SK-N-SH (cell line): ENCODE measurements at regions of chr15 and their contacts with region 1.

Region 1: DNA sequence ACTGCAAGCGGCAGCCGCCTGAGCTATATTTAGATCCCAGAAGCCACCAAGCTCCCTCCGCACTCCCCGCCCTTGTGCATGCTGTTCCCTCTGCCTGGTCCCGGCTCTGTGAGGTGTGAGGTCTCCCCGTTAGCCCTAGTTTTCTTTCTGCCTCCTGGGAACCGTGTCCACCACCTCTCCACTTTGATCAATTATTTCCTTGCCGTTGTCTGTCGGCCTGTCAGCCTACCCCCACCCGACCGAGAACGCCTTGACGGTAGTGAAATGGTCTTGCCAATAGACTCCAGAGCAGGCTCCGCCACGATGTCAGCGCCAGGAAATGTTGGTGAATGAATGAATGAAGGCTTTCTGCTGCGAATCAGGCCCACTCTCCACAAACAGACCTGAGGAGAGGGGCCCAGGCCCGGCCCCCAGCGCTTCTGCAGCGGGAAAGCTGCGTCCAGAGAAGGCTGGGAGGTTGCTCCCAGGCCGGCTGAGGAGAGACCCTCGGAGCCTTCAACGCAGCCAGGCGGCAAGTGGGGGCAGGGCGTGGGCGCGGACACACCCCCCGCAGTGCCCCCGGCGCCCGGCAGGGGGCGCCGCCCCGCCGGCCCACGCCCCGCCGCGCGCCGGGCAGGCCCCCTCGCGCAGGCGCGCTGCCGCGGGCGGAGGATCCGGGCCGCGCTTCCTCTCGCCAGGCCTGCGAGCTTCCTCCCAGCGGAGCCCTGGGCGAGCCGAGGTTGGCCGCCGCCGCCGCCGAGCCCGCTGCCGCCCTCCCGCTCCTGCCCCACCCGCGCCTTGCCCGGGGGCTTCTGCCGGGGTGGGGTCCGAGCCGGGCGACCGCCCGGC is at the start of gene CSK:
- DNase-seq: peak; percentile 99
- H3K4me3 ChIP-seq: peak within 1 kb of the TSS; percentile 85 to 97
- H3K27ac ChIP-seq: peak within 1 kb of the TSS in 1 of 2 experiments; percentile 76; a peak in 2 of 4 replicates
- H3K4me1 ChIP-seq: peaks cover 10 to 46% of the 10 kb centered on the region in 2 experiments; a peak in 2 of 4 replicates
- H3K27me3 ChIP-seq: no peaks in the 10 kb centered on the region
- CTCF ChIP-seq: peak; percentile 48
- EP300 ChIP-seq: no peak
- RAD21 ChIP-seq: no peak
- polyA plus RNA-seq, gene CSK: 34.7 and 53.1 TPM in 2 replicates

Region 2: DNA sequence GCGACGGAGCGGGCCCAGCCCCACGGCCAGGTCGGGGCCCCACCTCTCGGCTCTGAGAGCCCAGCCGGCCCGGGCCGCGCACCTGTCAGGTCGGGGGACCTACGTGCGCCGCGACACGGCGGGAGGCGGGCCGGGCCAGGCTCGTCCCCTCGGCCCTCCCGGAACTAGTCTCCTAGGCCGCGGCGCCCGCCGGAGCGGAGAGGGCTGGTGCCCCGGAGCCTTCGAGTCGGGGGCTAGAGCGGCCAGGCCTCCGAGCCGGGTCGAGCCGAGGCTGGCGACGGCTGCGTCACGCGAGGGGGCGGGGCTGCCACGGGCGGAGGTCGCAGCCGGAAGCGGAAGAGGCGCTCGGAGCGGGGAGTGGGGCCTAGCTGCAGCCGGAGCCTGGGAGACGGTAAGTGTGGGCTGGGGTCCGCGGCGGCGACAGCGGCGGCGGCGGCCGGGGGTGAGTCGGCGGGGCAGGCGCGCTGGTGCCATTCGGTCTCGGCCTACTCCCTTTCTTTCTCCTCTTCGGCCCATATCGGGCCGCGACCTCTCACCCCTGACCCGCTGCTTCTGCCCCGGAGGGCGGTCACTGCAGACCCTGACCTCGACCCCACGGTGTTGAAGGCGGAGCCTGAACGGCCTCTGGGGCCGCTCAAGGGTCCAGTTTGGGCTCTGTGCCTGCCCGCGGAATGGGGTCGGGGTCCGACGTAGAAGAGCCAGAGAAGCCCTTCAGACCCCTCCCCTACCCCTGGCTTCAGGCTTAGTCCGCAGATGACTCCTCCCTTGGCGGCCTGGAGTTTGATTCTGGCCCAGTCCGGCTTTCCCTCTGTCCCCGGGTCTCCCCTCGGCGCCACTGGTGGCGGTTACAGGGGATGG is 165.9 kb before region 1 on chr15 and contains the start of gene CLK3:
- CTCF ChIA-PET with region 1: interaction called, 1,109 read pairs
- POLR2A ChIA-PET with region 1: no interaction called
- DNase-seq: peak; percentile 99
- H3K4me3 ChIP-seq: peak within 1 kb of the TSS; percentile 98 to 99
- H3K27ac ChIP-seq: peak within 1 kb of the TSS; percentile 92 to 95
- H3K4me1 ChIP-seq: peaks cover 0 to 28% of the 10 kb centered on the region in 2 experiments; a peak in 2 of 4 replicates
- H3K27me3 ChIP-seq: no peaks in the 10 kb centered on the region
- CTCF ChIP-seq: no peak
- EP300 ChIP-seq: peak in 1 of 2 experiments; percentile 49; a peak in 1 of 4 replicates
- RAD21 ChIP-seq: no peak
- polyA plus RNA-seq, gene CLK3: 67.7 and 72.4 TPM in 2 replicates

Region 3: GRCh38 chr15:74682954-74683353 is 98.7 kb before region 1 on chr15:
- CTCF ChIA-PET with region 1: no interaction called
- POLR2A ChIA-PET with region 1: no interaction called
- DNase-seq: no peak
- H3K4me3 ChIP-seq: no peak overlapping the region
- H3K27ac ChIP-seq: no peak overlapping the region
- H3K4me1 ChIP-seq: no peaks in the 10 kb centered on the region
- H3K27me3 ChIP-seq: no peaks in the 10 kb centered on the region
- CTCF ChIP-seq: no peak
- EP300 ChIP-seq: no peak
- RAD21 ChIP-seq: no peak

Region 4: GRCh38 chr15:74799856-74800547 is 18.4 kb after region 1 on chr15:
- CTCF ChIA-PET with region 1: interaction called, 43 read pairs
- POLR2A ChIA-PET with region 1: no interaction called
- DNase-seq: peak; percentile 94
- H3K4me3 ChIP-seq: peak overlapping the region in 1 of 2 experiments; percentile 43; a peak in 1 of 4 replicates
- H3K27ac ChIP-seq: no peak overlapping the region
- H3K4me1 ChIP-seq: no peaks in the 10 kb centered on the region
- H3K27me3 ChIP-seq: no peaks in the 10 kb centered on the region
- CTCF ChIP-seq: peak; percentile 90
- EP300 ChIP-seq: no peak
- RAD21 ChIP-seq: peak; percentile 74

Region 5: GRCh38 chr15:74826364-74826819 is 44.7 kb after region 1 on chr15 and contains the start of gene CPLX3:
- CTCF ChIA-PET with region 1: interaction called, 11 read pairs
- POLR2A ChIA-PET with region 1: no interaction called
- DNase-seq: peak; percentile 62
- H3K4me3 ChIP-seq: no peak within 1 kb of the TSS
- H3K27ac ChIP-seq: no peak within 1 kb of the TSS
- H3K4me1 ChIP-seq: peaks cover 0 to 20% of the 10 kb centered on the region in 2 experiments; a peak in 1 of 4 replicates
- H3K27me3 ChIP-seq: peaks cover 24% of the 10 kb centered on the region; the same call in 1 of the 2 replicates
- CTCF ChIP-seq: no peak
- EP300 ChIP-seq: no peak
- RAD21 ChIP-seq: no peak
- polyA plus RNA-seq, gene CPLX3: not detected in 2 replicates

Region 6: DNA sequence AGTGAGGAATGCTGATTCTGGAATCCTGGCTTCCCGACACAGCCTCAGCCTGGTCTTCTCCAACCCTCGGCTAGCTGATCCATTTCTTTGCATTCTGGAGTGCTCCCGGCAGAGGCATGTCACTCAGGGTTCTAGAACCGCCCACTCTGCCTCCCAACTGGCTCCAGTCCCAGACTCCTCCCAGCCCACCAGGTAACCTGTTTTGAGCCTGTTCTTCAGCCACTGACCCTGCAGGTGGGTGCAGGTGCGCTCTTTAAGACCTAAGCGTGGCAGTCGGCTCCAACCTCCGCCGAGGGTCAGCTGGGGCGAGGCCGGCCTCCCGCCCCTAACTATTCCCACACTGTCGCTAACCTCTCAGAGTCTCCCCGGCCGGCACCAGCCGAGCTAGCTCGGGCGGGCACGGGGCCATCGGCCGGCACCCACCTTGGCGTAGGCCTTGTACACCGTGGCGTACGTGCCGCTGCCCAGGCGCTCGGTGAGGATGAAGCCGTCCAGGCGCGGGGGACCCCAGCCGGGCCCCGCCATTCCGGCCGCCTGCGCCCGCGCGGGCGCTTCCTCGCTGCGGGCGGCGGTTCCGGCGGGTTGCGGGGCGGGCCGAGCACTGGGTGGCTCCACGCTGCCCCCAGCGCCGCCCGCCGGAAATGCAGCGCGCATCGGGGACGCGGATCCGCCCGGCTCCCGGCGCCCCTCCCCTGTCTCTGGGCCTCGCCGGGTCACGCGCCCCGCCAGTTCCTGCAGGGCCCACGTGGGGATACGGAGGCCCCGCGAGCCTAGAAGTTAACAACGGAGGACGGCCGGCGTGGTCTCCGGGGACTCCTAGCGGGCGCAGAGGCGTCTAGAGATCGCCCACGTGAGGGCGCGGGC is 61.2 kb after region 1 on chr15 and contains the start of gene ULK3:
- CTCF ChIA-PET with region 1: interaction called, 15 read pairs
- POLR2A ChIA-PET with region 1: no interaction called
- DNase-seq: peak; percentile 99
- H3K4me3 ChIP-seq: peak within 1 kb of the TSS; percentile 98
- H3K27ac ChIP-seq: peak within 1 kb of the TSS; percentile 72 to 88
- H3K4me1 ChIP-seq: peaks cover 0 to 23% of the 10 kb centered on the region in 2 experiments; a peak in 2 of 4 replicates
- H3K27me3 ChIP-seq: no peaks in the 10 kb centered on the region
- CTCF ChIP-seq: peak; percentile 50
- EP300 ChIP-seq: no peak
- RAD21 ChIP-seq: peak; percentile 34; the same call in 1 of the 2 replicates
- polyA plus RNA-seq, gene ULK3: 41.3 and 55.3 TPM in 2 replicates

Region 7: DNA sequence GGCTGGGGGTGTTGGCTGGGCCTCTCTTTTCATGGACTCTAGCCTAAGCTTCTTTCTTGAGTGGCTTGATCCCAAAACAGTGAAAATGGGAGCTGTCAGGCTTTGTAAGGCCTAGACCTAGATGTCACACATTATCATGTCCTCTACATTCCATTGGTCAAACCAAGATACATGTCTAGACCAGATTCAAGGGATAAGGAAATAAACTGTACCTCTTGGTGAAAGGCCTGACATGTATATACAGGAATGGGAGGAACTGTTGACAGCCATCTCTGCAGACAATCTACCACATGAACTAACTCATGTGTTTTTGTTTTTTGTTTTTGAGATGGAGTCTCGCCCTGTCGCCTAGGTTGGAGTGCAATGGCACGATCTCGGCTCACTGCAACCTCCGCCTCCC is 186.0 kb after region 1 on chr15:
- CTCF ChIA-PET with region 1: no interaction called
- POLR2A ChIA-PET with region 1: no interaction called
- DNase-seq: no peak
- H3K4me3 ChIP-seq: no peak overlapping the region
- H3K27ac ChIP-seq: no peak overlapping the region
- H3K4me1 ChIP-seq: peaks cover 7% of the 10 kb centered on the region in 2 experiments; a peak in 2 of 4 replicates
- H3K27me3 ChIP-seq: no peaks in the 10 kb centered on the region
- CTCF ChIP-seq: no peak
- EP300 ChIP-seq: no peak
- RAD21 ChIP-seq: no peak

Region 8: DNA sequence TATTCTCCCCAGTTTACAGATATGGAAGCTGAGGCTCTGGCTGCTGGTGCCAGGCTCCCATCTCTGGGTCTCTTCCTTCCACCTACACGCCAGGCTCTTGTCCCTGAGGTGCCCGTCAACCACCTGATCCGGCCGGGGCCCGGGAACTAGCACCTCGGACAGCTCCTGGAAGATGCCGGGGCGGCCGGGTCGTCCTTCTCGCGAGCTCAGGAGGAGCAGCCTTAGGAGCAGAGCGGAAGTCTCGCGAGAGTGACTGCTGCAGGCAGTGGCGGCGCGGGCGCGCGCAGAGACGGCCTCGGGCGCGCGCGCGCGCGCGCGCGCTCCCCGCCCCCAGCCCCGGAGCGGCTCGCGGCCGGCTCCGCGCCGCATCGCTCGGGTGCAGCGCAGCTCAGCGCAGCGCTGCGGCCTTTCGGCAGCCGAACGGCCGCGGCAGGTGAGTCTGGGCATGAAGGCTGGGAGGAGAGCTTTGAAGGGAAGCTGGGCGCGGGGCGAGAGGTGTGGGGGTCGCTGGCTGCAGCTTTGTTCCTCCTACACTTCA is 213.7 kb after region 1 on chr15 and contains the start of gene SCAMP5:
- CTCF ChIA-PET with region 1: interaction called, 10 read pairs
- POLR2A ChIA-PET with region 1: interaction called, 4 read pairs
- DNase-seq: peak; percentile 97
- H3K4me3 ChIP-seq: peak within 1 kb of the TSS; percentile 67 to 84
- H3K27ac ChIP-seq: peak within 1 kb of the TSS in 1 of 2 experiments; percentile 90; a peak in 2 of 4 replicates
- H3K4me1 ChIP-seq: peaks cover 0 to 17% of the 10 kb centered on the region in 2 experiments; a peak in 1 of 4 replicates
- H3K27me3 ChIP-seq: no peaks in the 10 kb centered on the region
- CTCF ChIP-seq: no peak
- EP300 ChIP-seq: 0 out of 4 replicates have a peak, but pooled peaks of 1 of the 2 experiments have one; percentile 2
- RAD21 ChIP-seq: no peak
- polyA plus RNA-seq, gene SCAMP5: 27.9 and 32.7 TPM in 2 replicates